Caco-2 (cell line): ENCODE measurements at regions of chr3 and their contacts with region 1.

Region 1: GRCh38 chr3:78988324-78988723 is 779.5 kb downstream of the ROBO1 start:
- DNase-seq: peak in 1 of 2 experiments; percentile 3
- H3K4me3 ChIP-seq: no peak overlapping the region
- H3K4me3 Mint-ChIP-seq: no peak overlapping the region
- H3K27ac Mint-ChIP-seq: no peak overlapping the region
- H3K4me1 ChIP-seq: no peaks in the 10 kb centered on the region
- H3K4me1 Mint-ChIP-seq: no peaks in the 10 kb centered on the region
- H3K27me3 ChIP-seq: no peaks in the 10 kb centered on the region
- H3K27me3 Mint-ChIP-seq: no peaks in the 10 kb centered on the region
- CTCF ChIP-seq: peak; percentile 25 to 38

Region 2: GRCh38 chr3:78659386-78659987 is 328.8 kb before region 1 on chr3:
- CTCF ChIA-PET with region 1: no interaction called
- POLR2A ChIA-PET with region 1: no interaction called
- intact Hi-C with region 1: loop called (anchors 1 kb)
- DNase-seq: peak in 1 of 2 experiments; percentile 30
- H3K4me3 ChIP-seq: no peak overlapping the region
- H3K4me3 Mint-ChIP-seq: no peak overlapping the region
- H3K27ac Mint-ChIP-seq: no peak overlapping the region
- H3K4me1 ChIP-seq: no peaks in the 10 kb centered on the region
- H3K4me1 Mint-ChIP-seq: no peaks in the 10 kb centered on the region
- H3K27me3 ChIP-seq: no peaks in the 10 kb centered on the region
- H3K27me3 Mint-ChIP-seq: peaks cover 5% of the 10 kb centered on the region
- CTCF ChIP-seq: peak; percentile 46 to 78

Region 3: GRCh38 chr3:78857494-78858111 is 130.7 kb before region 1 on chr3:
- CTCF ChIA-PET with region 1: no interaction called
- POLR2A ChIA-PET with region 1: no interaction called
- intact Hi-C with region 1: loop called (anchors 1 kb)
- DNase-seq: peak in 1 of 2 experiments; percentile 11
- H3K4me3 ChIP-seq: no peak overlapping the region
- H3K4me3 Mint-ChIP-seq: no peak overlapping the region
- H3K27ac Mint-ChIP-seq: no peak overlapping the region
- H3K4me1 ChIP-seq: no peaks in the 10 kb centered on the region
- H3K4me1 Mint-ChIP-seq: no peaks in the 10 kb centered on the region
- H3K27me3 ChIP-seq: no peaks in the 10 kb centered on the region
- H3K27me3 Mint-ChIP-seq: no peaks in the 10 kb centered on the region
- CTCF ChIP-seq: no peak

Region 4: DNA sequence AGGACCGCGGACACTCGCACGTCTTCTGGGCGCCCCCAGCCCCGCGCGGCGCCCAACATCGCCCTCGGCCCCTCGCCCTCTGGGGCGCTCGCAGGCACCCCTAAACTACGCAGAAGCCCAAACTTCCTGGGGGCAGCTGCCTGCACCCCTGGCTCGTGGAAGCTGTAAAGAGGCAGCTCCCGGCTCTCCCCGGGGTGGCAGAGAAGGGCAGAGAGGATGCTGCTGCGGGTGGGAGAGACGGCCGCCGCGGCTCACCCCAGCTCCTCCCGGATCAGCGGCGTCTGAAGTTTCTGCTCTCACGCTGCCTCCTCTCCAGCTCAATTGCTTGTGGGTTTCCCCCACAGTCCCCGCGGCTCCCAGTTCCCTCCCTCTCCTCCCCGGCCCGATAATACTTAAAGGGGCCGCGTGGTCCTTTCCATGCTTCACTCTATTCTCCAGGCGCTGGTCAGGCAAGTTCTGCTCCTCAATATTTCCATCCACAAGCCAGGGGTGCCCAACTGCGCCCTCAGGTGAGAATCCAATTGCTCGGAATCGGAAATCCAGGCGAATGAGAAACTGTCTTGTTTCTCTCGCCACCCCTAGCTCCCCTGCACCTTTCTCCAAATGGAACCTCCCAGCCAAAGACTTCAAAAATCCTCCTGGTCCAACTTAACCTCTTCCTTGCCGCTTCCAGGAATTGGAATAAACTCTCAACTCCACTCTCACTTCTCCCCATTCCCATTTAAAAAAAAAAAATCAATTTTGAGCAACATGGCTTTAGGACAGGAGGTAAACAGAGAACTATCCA is 31.0 kb after region 1 on chr3:
- CTCF ChIA-PET with region 1: no interaction called
- POLR2A ChIA-PET with region 1: no interaction called
- intact Hi-C with region 1: loop called (anchors 2 kb)
- DNase-seq: peak; percentile 64 to 82
- H3K4me3 ChIP-seq: peak overlapping the region; percentile 40
- H3K4me3 Mint-ChIP-seq: no peak overlapping the region
- H3K27ac Mint-ChIP-seq: peak overlapping the region; percentile 61
- H3K4me1 ChIP-seq: peaks cover 5% of the 10 kb centered on the region; the same call in 1 of the 2 replicates
- H3K4me1 Mint-ChIP-seq: no peaks in the 10 kb centered on the region
- H3K27me3 ChIP-seq: no peaks in the 10 kb centered on the region
- H3K27me3 Mint-ChIP-seq: no peaks in the 10 kb centered on the region
- CTCF ChIP-seq: no peak

Region 5: GRCh38 chr3:79032686-79033318 is 44.5 kb after region 1 on chr3:
- CTCF ChIA-PET with region 1: no interaction called
- POLR2A ChIA-PET with region 1: no interaction called
- intact Hi-C with region 1: loop called (anchors 5 kb)
- DNase-seq: peak in 1 of 2 experiments; percentile 43
- H3K4me3 ChIP-seq: no peak overlapping the region
- H3K4me3 Mint-ChIP-seq: no peak overlapping the region
- H3K27ac Mint-ChIP-seq: no peak overlapping the region
- H3K4me1 ChIP-seq: no peaks in the 10 kb centered on the region
- H3K4me1 Mint-ChIP-seq: no peaks in the 10 kb centered on the region
- H3K27me3 ChIP-seq: no peaks in the 10 kb centered on the region
- H3K27me3 Mint-ChIP-seq: no peaks in the 10 kb centered on the region
- CTCF ChIP-seq: peak; percentile 45 to 56

Region 6: GRCh38 chr3:79111375-79112052 is 123.2 kb after region 1 on chr3:
- CTCF ChIA-PET with region 1: no interaction called
- POLR2A ChIA-PET with region 1: no interaction called
- intact Hi-C with region 1: no loop called
- DNase-seq: no peak
- H3K4me3 ChIP-seq: no peak overlapping the region
- H3K4me3 Mint-ChIP-seq: no peak overlapping the region
- H3K27ac Mint-ChIP-seq: no peak overlapping the region
- H3K4me1 ChIP-seq: no peaks in the 10 kb centered on the region
- H3K4me1 Mint-ChIP-seq: no peaks in the 10 kb centered on the region
- H3K27me3 ChIP-seq: no peaks in the 10 kb centered on the region
- H3K27me3 Mint-ChIP-seq: no peaks in the 10 kb centered on the region
- CTCF ChIP-seq: no peak